HEK293T (cell line): ENCODE measurements at regions of chr1 and their contacts with region 1.

Region 1: DNA sequence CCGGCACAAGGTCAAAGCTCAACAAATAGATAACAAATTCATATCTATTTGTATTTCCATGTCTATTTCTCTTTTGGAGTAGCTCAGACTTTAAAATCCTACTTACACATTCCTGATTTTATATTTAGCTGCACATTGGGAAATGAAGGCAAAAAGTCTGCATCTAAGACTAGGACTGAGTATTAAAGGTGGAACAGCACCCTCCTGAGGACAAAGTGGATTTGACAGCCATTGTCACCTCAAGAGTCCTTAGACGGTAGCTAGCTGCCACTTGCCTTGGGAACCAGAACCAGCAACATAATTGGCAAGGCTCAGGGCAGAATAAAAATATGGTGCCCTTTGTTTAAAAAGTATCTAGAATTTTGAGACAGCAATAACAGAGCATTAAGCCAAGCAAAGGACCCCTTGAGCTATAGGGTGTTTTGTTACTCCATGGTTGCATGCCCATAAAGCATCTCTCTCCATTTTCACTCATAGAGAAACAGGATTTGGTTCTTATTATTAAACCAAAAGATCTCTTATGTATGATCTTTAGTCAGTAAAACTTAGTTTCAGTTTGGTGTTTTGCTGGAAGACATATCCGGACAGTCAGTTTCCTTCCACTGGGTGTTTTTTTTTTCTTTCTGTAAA is 30.0 kb upstream of the SGIP1 start:
- DNase-seq: peak; percentile 72

Region 2: DNA sequence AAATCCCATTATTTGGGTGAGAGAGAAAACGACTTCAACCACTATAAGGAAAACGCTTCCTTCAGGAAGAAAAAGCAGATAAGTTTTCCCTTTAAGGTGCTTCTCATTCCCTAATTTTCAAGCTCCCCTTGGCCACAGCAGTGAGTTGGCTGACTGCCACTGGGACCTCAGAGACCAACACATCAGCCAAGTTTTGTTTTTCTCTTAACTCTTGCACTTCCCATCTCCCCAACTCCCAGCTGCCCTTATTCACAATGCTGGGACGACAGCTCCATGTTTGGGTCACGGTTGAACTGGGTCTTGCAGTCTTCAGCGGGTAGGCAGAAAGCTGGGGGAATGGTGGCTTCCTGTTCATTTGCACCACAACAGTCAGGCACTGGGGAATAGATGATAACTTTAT is 48.9 kb after region 1 on chr1:
- CTCF ChIA-PET with region 1: no interaction called
- POLR2A ChIA-PET with region 1: no interaction called
- DNase-seq: no peak

Region 3: DNA sequence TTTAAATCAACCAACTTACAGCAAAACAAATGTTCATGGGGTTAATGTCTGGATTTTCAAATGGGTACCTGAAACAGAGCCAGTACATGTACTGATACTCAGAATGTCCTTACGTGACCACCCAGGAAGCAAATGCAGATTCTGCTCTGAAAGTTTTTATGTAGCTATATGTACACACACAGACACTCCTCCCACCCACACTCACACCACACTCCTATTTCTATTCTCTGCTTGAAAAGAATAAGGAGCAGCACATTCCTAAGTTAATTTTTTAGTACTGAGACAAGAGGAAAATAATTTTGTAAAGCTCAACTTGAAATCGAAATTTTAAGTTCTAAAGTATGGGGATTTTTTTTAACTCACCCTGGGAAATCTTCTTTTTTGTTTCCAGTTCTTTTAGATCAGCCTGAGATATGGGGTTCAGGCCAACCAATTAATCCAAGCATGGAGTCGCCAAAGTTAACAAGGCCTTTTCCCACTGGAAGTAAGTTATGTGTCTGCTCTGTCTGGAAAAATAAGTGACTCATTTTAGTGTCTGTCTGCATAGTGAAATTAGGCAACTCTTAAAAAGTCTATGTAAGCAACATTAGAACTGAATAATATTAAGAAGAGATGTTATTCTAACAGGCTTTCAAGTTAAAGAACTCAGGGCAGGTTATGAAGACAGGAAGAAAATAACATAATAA is 172.8 kb after region 1 on chr1:
- CTCF ChIA-PET with region 1: interaction called, 10 read pairs
- POLR2A ChIA-PET with region 1: no interaction called
- DNase-seq: no peak